Aorta (tissue), 5 donors: ENCODE measurements at regions of chr15 and their contacts with region 1.

Region 1: DNA sequence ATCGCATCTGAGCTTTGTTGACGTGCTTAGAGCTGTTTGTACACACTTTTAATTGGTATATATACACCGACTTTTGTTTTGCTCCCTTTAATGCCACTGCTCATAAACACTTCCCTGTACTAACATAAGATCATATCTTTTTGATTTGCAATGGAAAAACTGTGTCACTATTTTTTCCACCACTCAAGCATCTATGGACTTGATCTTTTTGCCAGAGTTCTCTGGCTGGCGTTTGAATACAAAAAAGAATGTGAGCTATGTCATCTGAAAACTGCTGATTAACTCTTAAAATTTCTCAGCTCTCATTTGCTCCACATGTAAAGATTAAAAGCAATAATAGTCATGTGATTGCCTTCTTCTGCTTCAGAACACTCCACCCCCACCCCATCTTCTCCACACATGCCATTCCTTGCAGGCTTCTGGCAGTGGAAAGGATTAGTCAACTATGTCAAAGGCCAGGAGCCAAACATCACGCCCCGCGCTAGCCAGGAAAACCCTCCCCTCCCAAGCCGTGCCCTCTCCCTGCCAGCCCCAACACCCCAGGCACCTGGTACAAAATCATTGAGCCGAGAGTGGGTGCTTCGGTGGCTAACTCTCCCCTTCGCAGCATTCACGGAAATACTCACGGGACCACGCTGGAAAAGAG is 123.4 kb upstream of the MEF2A start:
- DNase-seq: peak; percentile 82 to 89
- ATAC-seq: peak; percentile 86
- H3K4me3 ChIP-seq: no peak overlapping the region
- H3K27ac ChIP-seq: peak overlapping the region; percentile 38 to 86
- H3K4me1 ChIP-seq: peaks cover 0 to 1% of the 10 kb centered on the region in 2 donors
- H3K27me3 ChIP-seq: no peaks in the 10 kb centered on the region

Region 2: GRCh38 chr15:99181545-99181971 is 260.8 kb before region 1 on chr15:
- intact Hi-C with region 1: no loop called
- DNase-seq: peak in 1 of 2 donors; percentile 80
- ATAC-seq: peak; percentile 86
- H3K4me3 ChIP-seq: no peak overlapping the region
- H3K27ac ChIP-seq: peak overlapping the region; percentile 16 to 91
- H3K4me1 ChIP-seq: no peaks in the 10 kb centered on the region
- H3K27me3 ChIP-seq: no peaks in the 10 kb centered on the region

Region 3: GRCh38 chr15:99476413-99477222 is 34.2 kb after region 1 on chr15:
- intact Hi-C with region 1: loop called in 1 of 2 experiments (anchors 2 kb)
- DNase-seq: peak; percentile 89 to 91
- ATAC-seq: peak; percentile 82
- H3K4me3 ChIP-seq: no peak overlapping the region
- H3K27ac ChIP-seq: peak overlapping the region in 1 of 2 donors; percentile 14
- H3K4me1 ChIP-seq: no peaks in the 10 kb centered on the region
- H3K27me3 ChIP-seq: no peaks in the 10 kb centered on the region

Region 4: GRCh38 chr15:99507504-99508310 is 65.3 kb after region 1 on chr15:
- intact Hi-C with region 1: no loop called
- DNase-seq: peak in 1 of 2 donors; percentile 72
- ATAC-seq: peak; percentile 67
- H3K4me3 ChIP-seq: no peak overlapping the region
- H3K27ac ChIP-seq: peak overlapping the region; percentile 10 to 93
- H3K4me1 ChIP-seq: no peaks in the 10 kb centered on the region
- H3K27me3 ChIP-seq: no peaks in the 10 kb centered on the region

Region 5: DNA sequence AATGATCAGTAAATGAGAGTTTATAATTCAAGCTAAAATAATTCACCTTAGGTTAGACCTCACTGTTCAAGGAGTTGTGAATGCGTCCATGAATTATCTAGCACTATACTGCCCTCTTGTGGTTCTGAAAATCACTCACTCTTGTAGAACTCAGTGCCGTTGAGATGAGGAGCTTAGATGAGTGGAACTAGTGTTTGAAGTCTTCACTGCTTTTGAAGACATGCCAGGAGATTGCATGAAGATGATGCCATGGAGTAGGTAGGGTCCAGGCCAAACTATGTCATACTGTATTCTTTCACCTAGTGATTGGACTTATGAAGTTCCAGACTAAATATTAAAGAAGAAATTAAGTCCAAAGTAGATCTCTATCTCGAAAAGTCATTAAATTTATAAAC is 262.1 kb after region 1 on chr15:
- intact Hi-C with region 1: loop called in 1 of 2 experiments (anchors 10 kb)
- DNase-seq: no peak
- ATAC-seq: peak; percentile 90
- H3K4me3 ChIP-seq: no peak overlapping the region
- H3K27ac ChIP-seq: no peak overlapping the region
- H3K4me1 ChIP-seq: peaks cover 0 to 3% of the 10 kb centered on the region in 2 donors
- H3K27me3 ChIP-seq: no peaks in the 10 kb centered on the region